Esophagus muscularis mucosa (tissue), 4 donors: ENCODE measurements at regions of chr1 and their contacts with region 1.

Region 1: GRCh38 chr1:158035976-158036583 is 42.6 kb downstream of the KIRREL1 start:
- DNase-seq: no peak
- H3K4me3 ChIP-seq: no peak overlapping the region
- H3K27ac ChIP-seq: no peak overlapping the region
- H3K4me1 ChIP-seq: peaks cover 15 to 52% (median 45%) of the 10 kb centered on the region in 4 donors
- H3K27me3 ChIP-seq: no peaks in the 10 kb centered on the region
- CTCF ChIP-seq: peak; percentile 77 to 82 (median 79)
- EP300 ChIP-seq: no peak
- POLR2A ChIP-seq: no peak

Region 2: GRCh38 chr1:157992031-157992832 is 43.8 kb before region 1 on chr1:
- intact Hi-C with region 1: loop called (anchors 1 kb)
- DNase-seq: no peak
- H3K4me3 ChIP-seq: peak overlapping the region in 2 of 4 donors; percentile 69 to 94
- H3K27ac ChIP-seq: peak overlapping the region; percentile 85 to 95 (median 94)
- H3K4me1 ChIP-seq: peaks cover 24 to 50% (median 48%) of the 10 kb centered on the region in 4 donors
- H3K27me3 ChIP-seq: peaks cover 0 to 8% (median 0%) of the 10 kb centered on the region in 4 donors
- CTCF ChIP-seq: peak; percentile 91 to 97 (median 93)
- EP300 ChIP-seq: no peak
- POLR2A ChIP-seq: no peak

Region 3: GRCh38 chr1:158087320-158087927 is 51.3 kb after region 1 on chr1:
- intact Hi-C with region 1: loop called (anchors 5 kb)
- DNase-seq: no peak
- H3K4me3 ChIP-seq: no peak overlapping the region
- H3K27ac ChIP-seq: no peak overlapping the region
- H3K4me1 ChIP-seq: no peaks in the 10 kb centered on the region
- H3K27me3 ChIP-seq: no peaks in the 10 kb centered on the region
- CTCF ChIP-seq: peak; percentile 80 to 88 (median 83)
- EP300 ChIP-seq: no peak
- POLR2A ChIP-seq: no peak

Region 4: DNA sequence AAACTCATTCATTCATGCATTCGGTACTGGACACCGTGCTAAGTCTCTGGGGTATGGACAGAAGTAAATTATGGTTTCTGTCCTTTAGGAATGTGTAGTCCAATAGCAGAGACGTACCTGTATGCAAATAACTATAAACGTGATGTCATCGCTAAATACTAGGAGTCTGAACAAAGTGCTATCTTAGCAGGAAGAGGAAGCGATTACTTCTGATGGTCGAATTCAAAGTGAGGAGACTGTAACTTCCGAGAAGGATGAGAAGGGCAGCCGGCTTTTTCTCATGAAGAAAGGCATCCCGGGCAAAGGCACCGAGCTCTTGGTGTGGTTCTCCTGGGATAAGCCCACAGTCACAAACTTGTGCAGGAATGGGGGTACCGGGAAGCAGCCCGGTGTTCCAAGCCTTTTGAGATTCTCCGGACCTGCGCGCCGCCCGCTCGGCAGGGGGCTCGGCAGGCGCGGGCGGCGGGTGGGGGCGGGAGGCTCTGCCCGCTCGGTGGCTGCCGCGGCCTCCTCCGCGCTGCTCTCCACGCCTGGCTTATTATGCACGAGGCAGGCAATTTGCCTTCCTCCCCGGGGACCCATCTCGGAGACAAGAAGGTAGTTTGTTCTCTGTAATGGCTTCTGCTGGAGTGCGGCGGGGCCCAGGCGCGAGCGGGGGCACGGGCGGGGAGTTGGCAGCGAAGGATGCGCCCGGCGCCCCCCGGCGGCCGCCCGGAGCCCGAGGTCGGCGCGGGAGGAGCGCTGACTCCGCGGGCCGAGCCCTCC is 77.1 kb after region 1 on chr1:
- intact Hi-C with region 1: no loop called
- DNase-seq: no peak
- H3K4me3 ChIP-seq: peak overlapping the region; percentile 59 to 66 (median 60)
- H3K27ac ChIP-seq: no peak overlapping the region
- H3K4me1 ChIP-seq: peaks cover 9 to 21% (median 20%) of the 10 kb centered on the region in 4 donors
- H3K27me3 ChIP-seq: peaks cover 0 to 58% (median 2%) of the 10 kb centered on the region in 4 donors
- CTCF ChIP-seq: peak; percentile 32 to 51 (median 44)
- EP300 ChIP-seq: no peak
- POLR2A ChIP-seq: no peak